Posterior cingulate gyrus (tissue), 11 donors: ENCODE measurements at regions of chr9 and their contacts with region 1.

Region 1: DNA sequence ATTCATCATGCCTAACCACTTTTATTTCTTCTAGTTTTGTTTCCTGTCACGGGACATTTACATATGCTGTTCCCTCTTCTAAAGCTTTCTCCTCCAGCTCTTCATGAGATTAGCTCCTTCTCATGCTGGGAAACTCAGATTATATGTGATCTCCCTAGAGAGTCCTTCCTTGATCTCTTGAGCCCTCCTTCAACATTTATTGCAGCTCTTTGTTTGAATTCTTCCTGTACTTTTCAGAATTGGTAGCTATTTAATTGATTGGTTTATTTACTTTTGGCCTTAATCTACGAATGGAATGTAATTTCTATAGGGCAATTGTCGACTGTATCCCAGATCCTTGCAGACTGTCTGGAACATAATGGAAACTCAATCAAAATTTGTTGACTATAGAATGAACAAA is 9.7 kb upstream of the TRPM3 start:
- DNase-seq: no peak

Region 2: GRCh38 chr9:71058660-71059059 is 72.5 kb before region 1 on chr9:
- intact Hi-C with region 1: no loop called
- DNase-seq: no peak

Region 3: DNA sequence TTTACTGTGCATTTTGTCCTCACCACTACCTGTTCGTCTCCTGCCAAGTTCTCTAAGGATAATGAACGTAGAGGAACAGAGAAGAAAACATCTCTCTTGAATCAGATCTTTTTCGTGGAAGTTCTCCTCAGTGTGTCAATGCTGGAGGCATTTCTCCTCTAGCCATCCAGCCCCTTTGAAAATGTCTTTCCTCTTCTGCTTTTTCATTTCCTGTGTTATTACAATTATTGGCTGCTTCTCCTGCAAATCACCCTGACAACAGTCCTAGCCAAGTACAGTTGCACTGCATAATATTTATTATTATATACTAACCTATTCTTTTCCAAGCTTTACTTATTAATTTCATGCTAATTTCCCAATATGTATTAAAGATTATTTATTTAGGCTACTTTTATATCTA is 52.1 kb after region 1 on chr9:
- intact Hi-C with region 1: loop called (anchors 5 kb)
- DNase-seq: no peak